ENCODE measurements at regions of chr12 and their contacts with region 1.

Region 1: GRCh38 chr12:62552906-62553556 is 86.4 kb downstream of the MON2 start:
- H3K4me3 Mint-ChIP-seq: no peak overlapping the region
- H3K27ac Mint-ChIP-seq: no peak overlapping the region
- H3K4me1 Mint-ChIP-seq: no peaks in the 10 kb centered on the region
- H3K27me3 Mint-ChIP-seq: no peaks in the 10 kb centered on the region

Region 2: GRCh38 chr12:62396750-62397149 is 156.3 kb before region 1 on chr12:
- intact Hi-C with region 1: loop called (anchors 10 kb)
- H3K4me3 Mint-ChIP-seq: no peak overlapping the region
- H3K27ac Mint-ChIP-seq: no peak overlapping the region
- H3K4me1 Mint-ChIP-seq: no peaks in the 10 kb centered on the region
- H3K27me3 Mint-ChIP-seq: no peaks in the 10 kb centered on the region

Region 3: GRCh38 chr12:62599854-62600437 is 46.9 kb after region 1 on chr12:
- intact Hi-C with region 1: no loop called
- H3K4me3 Mint-ChIP-seq: no peak overlapping the region
- H3K27ac Mint-ChIP-seq: peak overlapping the region; percentile 100
- H3K4me1 Mint-ChIP-seq: peaks cover 13% of the 10 kb centered on the region
- H3K27me3 Mint-ChIP-seq: no peaks in the 10 kb centered on the region

Region 4: DNA sequence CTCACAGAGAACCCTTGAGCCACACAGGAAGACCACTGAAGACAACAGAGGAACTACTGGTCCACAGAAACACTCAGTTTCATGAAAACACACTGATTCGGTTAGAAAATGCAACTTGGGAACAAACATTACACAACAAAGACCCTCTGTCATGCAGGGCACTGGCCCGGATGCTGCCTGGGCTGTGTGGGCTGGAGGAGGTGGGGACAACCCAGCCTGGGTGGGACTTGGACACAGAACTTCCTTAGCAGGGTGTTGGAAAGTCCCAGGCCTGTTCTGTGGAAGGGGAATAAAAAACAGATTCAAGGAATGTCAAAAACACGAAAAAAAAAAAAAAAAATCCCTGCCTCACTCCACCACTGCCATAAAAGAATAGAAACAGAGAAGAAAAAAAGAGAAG is 94.6 kb after region 1 on chr12:
- intact Hi-C with region 1: no loop called
- H3K4me3 Mint-ChIP-seq: no peak overlapping the region
- H3K27ac Mint-ChIP-seq: peak overlapping the region; percentile 78
- H3K4me1 Mint-ChIP-seq: peaks cover 36% of the 10 kb centered on the region
- H3K27me3 Mint-ChIP-seq: no peaks in the 10 kb centered on the region

Measured in dendritic cell treated with granulocyte-macrophage colony-stimulating factor and Interleukin-4, amounts not matched to agents 40 ng/mL and 50 ng/mL, for 4 days (primary cell).